Motor neuron (in vitro differentiated cells): ENCODE measurements at regions of chr6 and their contacts with region 1.

Region 1: DNA sequence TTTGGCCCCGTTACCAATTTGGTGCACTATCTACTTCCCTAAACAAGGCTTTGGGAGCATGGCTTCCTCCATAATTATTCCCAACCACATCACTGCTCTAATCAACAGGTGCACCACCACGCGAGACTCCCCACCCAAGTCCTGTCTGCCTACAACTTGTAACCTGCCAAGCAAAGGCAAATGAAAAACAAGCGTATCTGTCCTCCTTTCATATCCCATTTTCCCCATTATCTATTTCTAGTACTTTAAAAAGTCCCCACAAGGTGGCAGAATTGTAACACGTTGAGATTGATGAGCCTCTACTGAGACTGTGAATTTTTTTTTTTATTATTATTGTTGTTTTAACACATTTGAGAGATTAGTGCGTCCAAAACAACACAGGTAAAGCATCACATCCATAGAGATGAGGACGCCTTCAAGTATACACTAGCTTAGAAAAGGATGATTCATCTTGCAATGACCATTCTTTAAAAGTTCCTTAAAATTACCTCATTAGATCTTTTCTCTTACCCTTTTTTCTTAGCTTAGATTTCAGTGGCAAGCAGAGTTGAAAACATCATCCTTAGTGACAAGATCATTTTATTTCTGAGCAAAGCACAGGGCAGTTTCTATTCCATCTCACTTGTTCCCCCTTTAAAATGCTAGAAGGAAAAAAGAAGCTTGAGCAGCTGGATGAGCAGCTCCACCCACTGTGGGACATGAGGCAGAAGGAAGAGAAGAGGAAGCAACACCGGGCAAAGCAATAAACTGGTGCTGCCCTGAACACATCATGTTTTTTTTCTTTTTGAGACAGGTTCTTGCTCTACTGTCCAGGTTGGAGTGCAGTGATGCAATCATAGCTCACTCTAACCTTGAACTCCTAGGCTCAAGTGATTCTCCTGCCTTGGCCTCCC is 210.8 kb downstream of the ARHGAP18 start:
- ATAC-seq: peak in 6 of 8 experiments; percentile 20 to 65 (median 46)
- H3K4me3 ChIP-seq: no peak overlapping the region
- H3K27ac ChIP-seq: no peak overlapping the region
- H3K4me1 ChIP-seq: peaks cover 13 to 22% of the 10 kb centered on the region in 2 donors

Region 2: GRCh38 chr6:129567374-129567773 is 68.2 kb after region 1 on chr6:
- in situ Hi-C with region 1: loop called in 1 of 9 experiments (anchors 10 kb)
- ATAC-seq: peak in 3 of 8 experiments; percentile 18 to 35 (median 31)
- H3K4me3 ChIP-seq: no peak overlapping the region
- H3K27ac ChIP-seq: no peak overlapping the region
- H3K4me1 ChIP-seq: no peaks in the 10 kb centered on the region